ENCODE measurements at regions of chr17 and their contacts with region 1.

Region 1: DNA sequence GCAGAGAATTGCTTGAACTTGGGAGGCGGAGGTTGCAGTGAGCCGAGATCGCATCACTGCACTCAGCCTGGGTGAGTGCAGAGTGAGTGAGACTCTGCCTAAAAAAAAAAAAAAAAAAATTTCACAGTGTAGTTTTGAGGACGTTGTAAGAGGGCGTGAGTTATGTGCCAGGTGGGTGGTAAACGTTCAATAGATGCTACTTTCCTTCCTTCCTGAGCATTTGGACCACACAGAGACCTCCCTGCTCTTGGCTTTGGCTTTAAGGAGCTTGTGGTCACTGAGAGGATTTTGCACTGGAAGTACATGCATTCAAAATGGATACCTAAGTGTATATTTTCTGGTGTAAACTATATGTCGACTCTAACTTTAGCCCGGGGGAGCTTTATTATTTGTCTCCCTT is 30.5 kb downstream of the SOST start:
- H3K4me3 ChIP-seq: no peak overlapping the region
- H3K27ac ChIP-seq: no peak overlapping the region
- H3K4me1 ChIP-seq: peaks cover 4% of the 10 kb centered on the region
- CTCF ChIP-seq: no peak

Region 2: DNA sequence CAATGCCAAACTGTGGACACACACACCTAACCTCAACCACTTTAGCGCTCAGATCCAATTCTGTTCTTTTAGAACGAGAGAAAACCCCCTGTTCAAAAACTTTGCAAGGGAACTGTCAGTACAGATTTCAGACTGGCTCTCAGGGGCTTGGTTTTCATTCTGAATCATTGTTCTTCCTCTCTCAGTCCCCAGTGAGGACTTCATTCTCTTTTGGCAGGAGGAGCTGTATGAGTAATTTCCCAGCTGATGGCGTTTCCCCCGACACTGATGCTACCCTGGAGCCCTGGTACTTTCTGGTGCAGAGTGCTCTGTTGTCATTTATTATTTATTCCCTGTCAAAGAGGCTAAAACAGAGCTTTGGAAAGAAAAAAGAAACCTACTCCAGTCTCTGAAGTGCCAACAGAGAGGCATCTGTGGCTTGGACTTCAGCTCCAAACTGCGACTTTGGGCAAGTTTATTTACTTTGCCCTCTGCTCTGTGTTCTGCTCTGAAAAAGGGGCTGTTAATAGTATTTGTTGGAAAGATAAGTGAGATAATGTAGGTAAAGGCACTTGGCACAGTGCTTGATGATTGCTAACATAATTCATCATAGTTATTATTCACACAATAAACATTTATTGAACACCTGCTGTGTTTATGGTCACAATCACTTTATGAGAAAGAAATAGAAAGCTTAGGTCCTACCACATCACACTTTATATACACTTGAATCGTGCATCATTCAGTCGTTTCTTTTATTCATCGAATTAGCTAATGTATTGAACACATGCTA is 210.3 kb before region 1 on chr17:
- CTCF ChIA-PET with region 1: interaction called, 11 read pairs
- POLR2A ChIA-PET with region 1: no interaction called
- H3K4me3 ChIP-seq: no peak overlapping the region
- H3K27ac ChIP-seq: peak overlapping the region; percentile 29; the same call in 1 of the 2 replicates
- H3K4me1 ChIP-seq: peaks cover 15% of the 10 kb centered on the region
- CTCF ChIP-seq: no peak

Region 3: GRCh38 chr17:43628089-43628650 is 99.9 kb before region 1 on chr17:
- CTCF ChIA-PET with region 1: no interaction called
- POLR2A ChIA-PET with region 1: no interaction called
- H3K4me3 ChIP-seq: no peak overlapping the region
- H3K27ac ChIP-seq: peak overlapping the region; percentile 24; the same call in 1 of the 2 replicates
- H3K4me1 ChIP-seq: peaks cover 7% of the 10 kb centered on the region
- CTCF ChIP-seq: no peak

Region 4: GRCh38 chr17:43680461-43680860 is 47.6 kb before region 1 on chr17:
- CTCF ChIA-PET with region 1: no interaction called
- POLR2A ChIA-PET with region 1: no interaction called
- H3K4me3 ChIP-seq: no peak overlapping the region
- H3K27ac ChIP-seq: no peak overlapping the region
- H3K4me1 ChIP-seq: peaks cover 6% of the 10 kb centered on the region
- CTCF ChIP-seq: no peak

Region 5: GRCh38 chr17:43750154-43750553 is 22.1 kb after region 1 on chr17:
- CTCF ChIA-PET with region 1: no interaction called
- POLR2A ChIA-PET with region 1: no interaction called
- H3K4me3 ChIP-seq: no peak overlapping the region
- H3K27ac ChIP-seq: no peak overlapping the region
- H3K4me1 ChIP-seq: peaks cover 3% of the 10 kb centered on the region; the same call in 1 of the 2 replicates
- CTCF ChIP-seq: no peak

Region 6: DNA sequence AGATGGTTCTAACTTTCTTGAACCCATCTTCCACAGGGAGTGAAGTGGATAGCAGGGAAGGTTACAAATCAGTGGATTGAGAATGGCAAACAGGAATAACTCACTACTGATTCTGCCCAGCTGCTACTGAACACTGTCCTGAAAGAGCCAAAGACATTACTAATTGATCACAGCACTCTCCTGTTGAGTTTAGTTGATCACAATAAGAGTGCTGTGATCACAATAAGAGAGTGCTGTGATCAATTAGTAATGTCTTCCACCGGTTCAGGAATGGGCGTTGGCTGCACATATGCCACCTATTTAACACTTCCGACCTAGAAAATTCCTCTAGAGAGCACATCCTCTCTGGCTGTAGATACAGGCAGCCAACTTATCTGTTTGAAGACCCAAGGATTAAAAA is 63.5 kb after region 1 on chr17:
- CTCF ChIA-PET with region 1: no interaction called
- POLR2A ChIA-PET with region 1: no interaction called
- H3K4me3 ChIP-seq: no peak overlapping the region
- H3K27ac ChIP-seq: no peak overlapping the region
- H3K4me1 ChIP-seq: no peaks in the 10 kb centered on the region
- CTCF ChIP-seq: no peak

Measured in HEK293 (cell line).